BJ (cell line): ENCODE measurements at regions of chr13 and their contacts with region 1.

Region 1: GRCh38 chr13:26719356-26719945 is 41.1 kb downstream of the GPR12 start:
- DNase-seq: no peak
- H3K4me3 ChIP-seq: no peak overlapping the region
- H3K27me3 ChIP-seq: peaks cover 4% of the 10 kb centered on the region; the same call in 1 of the 2 replicates
- CTCF ChIP-seq: peak; percentile 32

Region 2: GRCh38 chr13:26707122-26708006 is 12.1 kb before region 1 on chr13:
- CTCF ChIA-PET with region 1: interaction called, 10 read pairs
- POLR2A ChIA-PET with region 1: no interaction called
- DNase-seq: no peak
- H3K4me3 ChIP-seq: no peak overlapping the region
- H3K27me3 ChIP-seq: peaks cover 4% of the 10 kb centered on the region; the same call in 1 of the 2 replicates
- CTCF ChIP-seq: peak; percentile 65